ENCODE measurements at regions of chr21 and their contacts with region 1.

Region 1: DNA sequence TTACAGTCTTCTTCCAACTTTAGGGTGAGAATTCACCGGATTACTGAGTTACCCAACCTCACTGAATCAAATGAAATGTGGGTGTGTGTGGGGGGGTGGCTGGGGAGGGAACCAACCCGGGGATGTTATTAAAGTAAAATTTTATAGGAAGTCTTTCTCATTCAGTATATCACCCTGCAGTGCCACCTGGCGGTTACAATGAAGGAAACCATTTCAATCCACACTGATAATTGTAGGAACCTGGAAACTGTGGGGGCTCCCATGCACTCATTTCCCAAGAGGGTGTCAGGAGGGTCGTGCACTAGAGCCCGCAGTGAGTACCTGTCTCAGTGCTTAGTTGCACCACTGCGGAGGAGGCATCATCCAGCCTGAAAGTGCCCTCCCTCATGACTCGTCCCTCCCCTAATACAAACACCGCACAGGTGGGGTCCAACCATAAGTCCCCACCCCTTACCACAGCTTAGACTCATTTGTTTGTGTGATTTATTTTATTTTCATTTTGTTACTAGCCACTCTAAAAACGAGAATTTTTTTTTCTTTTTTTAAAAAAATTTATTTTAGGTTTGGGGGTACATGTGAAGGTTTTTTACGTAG is 29.1 kb upstream of the IGSF5 start:
- DNase-seq: peak; percentile 66 to 72
- H3K4me3 ChIP-seq: no peak overlapping the region
- H3K27ac ChIP-seq: no peak overlapping the region
- H3K4me1 ChIP-seq: no peaks in the 10 kb centered on the region
- H3K27me3 ChIP-seq: no peaks in the 10 kb centered on the region
- CTCF ChIP-seq: peak; percentile 23 to 76 (median 56)
- POLR2A ChIP-seq: no peak

Region 2: GRCh38 chr21:39518138-39518846 is 197.6 kb before region 1 on chr21:
- intact Hi-C with region 1: loop called (anchors 2 kb)
- DNase-seq: peak; percentile 51 to 62
- H3K4me3 ChIP-seq: no peak overlapping the region
- H3K27ac ChIP-seq: peak overlapping the region; percentile 3 to 33 (median 13)
- H3K4me1 ChIP-seq: peaks cover 12 to 20% of the 10 kb centered on the region in 2 donors
- H3K27me3 ChIP-seq: no peaks in the 10 kb centered on the region
- CTCF ChIP-seq: peak; percentile 52 to 97 (median 86)
- POLR2A ChIP-seq: no peak

Region 3: GRCh38 chr21:40471111-40471510 is 755.2 kb after region 1 on chr21:
- intact Hi-C with region 1: no loop called
- DNase-seq: no peak
- H3K4me3 ChIP-seq: no peak overlapping the region
- H3K27ac ChIP-seq: no peak overlapping the region
- H3K4me1 ChIP-seq: no peaks in the 10 kb centered on the region
- H3K27me3 ChIP-seq: no peaks in the 10 kb centered on the region
- CTCF ChIP-seq: no peak
- POLR2A ChIP-seq: no peak

Measured in thyroid gland (tissue), 4 donors.